Common myeloid progenitor, CD34-positive (primary cell): ENCODE measurements at regions of chr10 and their contacts with region 1.

Region 1: DNA sequence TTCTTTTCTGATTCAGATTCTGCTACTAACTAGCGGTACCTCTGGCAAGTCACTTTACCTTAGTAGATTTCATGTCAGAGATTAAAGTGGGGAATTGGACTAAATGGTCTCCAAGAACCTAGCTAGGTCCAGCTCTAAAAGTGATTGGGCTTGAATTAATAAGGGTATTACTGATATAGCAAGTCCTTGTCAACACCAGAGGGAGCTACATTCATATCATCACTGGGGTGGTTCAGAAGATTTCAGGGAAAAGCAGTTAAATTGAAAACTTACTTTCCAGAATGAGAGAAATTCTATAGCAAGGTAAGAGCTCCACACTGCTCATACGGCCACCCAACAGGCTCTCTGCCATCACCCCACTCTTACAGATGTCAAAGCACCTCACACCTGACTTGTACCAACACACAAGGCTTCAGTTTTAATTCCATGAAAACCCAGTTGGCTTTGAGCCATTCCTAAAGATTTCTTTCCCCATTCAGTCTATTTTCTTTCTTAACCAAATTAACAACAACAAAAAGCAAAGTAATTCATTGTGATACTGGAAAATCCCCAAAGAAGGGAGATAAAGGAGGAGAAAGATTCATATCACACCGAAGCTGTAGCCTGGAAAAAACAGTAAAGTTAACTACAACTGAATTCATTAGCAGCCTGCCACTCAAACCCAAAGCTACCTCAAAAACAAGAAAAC is 38.0 kb upstream of the SPOCK2 start:
- DNase-seq: peak; percentile 55 to 65 (median 59)
- H3K4me3 ChIP-seq: no peak overlapping the region
- H3K27ac ChIP-seq: no peak overlapping the region
- H3K4me1 ChIP-seq: no peaks in the 10 kb centered on the region
- H3K27me3 ChIP-seq: no peaks in the 10 kb centered on the region

Region 2: GRCh38 chr10:72114706-72115450 is 11.4 kb before region 1 on chr10:
- CTCF ChIA-PET with region 1: interaction called, 20 read pairs
- POLR2A ChIA-PET with region 1: no interaction called
- DNase-seq: no peak
- H3K4me3 ChIP-seq: no peak overlapping the region
- H3K27ac ChIP-seq: no peak overlapping the region
- H3K4me1 ChIP-seq: no peaks in the 10 kb centered on the region
- H3K27me3 ChIP-seq: no peaks in the 10 kb centered on the region

Region 3: DNA sequence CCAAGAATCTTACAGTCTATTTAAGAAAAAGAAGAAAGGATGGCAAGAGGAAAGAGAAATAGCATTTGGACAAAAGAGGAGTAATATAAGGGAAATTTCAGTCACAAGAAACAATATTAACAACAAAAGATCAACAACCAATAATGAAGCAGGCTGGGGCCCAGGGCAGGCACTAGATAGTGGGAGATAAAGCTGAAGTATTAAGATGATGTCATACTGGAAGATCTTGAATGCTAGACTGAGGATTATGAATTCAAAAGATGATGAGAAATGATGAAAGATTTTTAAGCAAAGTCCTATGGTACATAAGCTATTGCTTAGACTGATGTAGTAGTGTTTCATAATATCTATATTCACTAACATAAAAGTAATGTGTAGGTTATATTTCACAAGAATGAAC is 13.8 kb after region 1 on chr10:
- CTCF ChIA-PET with region 1: interaction called, 23 read pairs
- POLR2A ChIA-PET with region 1: interaction called, 3 read pairs
- DNase-seq: no peak
- H3K4me3 ChIP-seq: no peak overlapping the region
- H3K27ac ChIP-seq: no peak overlapping the region
- H3K4me1 ChIP-seq: peaks cover 0 to 6% (median 2%) of the 10 kb centered on the region in 4 experiments
- H3K27me3 ChIP-seq: no peaks in the 10 kb centered on the region

Region 4: DNA sequence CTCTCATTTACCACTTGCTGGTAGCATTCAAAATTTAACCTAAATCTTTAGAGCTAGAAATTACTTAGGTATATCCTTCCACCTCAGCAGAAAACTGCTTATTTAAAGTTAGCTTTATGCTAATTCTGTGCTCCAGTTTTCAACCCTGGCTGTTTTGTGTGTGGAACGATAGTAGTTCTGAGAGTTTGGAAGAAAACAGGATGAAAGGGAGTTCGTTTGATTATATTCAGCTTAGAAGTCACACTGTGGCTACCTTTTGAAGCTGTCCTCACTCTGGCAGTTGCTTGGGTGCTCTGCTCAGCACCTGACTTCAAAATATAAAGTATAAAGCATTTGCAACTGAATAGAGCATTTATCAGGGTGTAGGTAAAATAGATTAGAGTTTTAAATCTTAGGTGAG is 92.4 kb after region 1 on chr10:
- CTCF ChIA-PET with region 1: interaction called, 25 read pairs
- POLR2A ChIA-PET with region 1: no interaction called
- DNase-seq: no peak
- H3K4me3 ChIP-seq: no peak overlapping the region
- H3K27ac ChIP-seq: peak overlapping the region in 1 of 2 experiments; percentile 32
- H3K4me1 ChIP-seq: peaks cover 17 to 40% (median 26%) of the 10 kb centered on the region in 4 experiments
- H3K27me3 ChIP-seq: no peaks in the 10 kb centered on the region